Heart right ventricle (tissue), 16 donors: ENCODE measurements at regions of chr12 and their contacts with region 1.

Region 1: GRCh38 chr12:98593351-98594049 is at the start of gene SLC25A3:
- DNase-seq: peak; percentile 97
- ATAC-seq: peak; percentile 99
- H3K4me3 ChIP-seq: peak within 1 kb of the TSS; percentile 76 to 99 (median 91)
- H3K27ac ChIP-seq: peak within 1 kb of the TSS; percentile 97 to 100 (median 99)
- H3K4me1 ChIP-seq: peaks cover 14 to 41% (median 27%) of the 10 kb centered on the region in 9 donors
- H3K27me3 ChIP-seq: no peaks in the 10 kb centered on the region
- CTCF ChIP-seq: no peak
- total RNA-seq, gene SLC25A3: 1,098 to 2,142 (median 1,719) TPM

Region 2: GRCh38 chr12:98503592-98504367 is 89.7 kb before region 1 on chr12:
- intact Hi-C with region 1: loop called in 1 of 10 experiments (anchors 5 kb)
- DNase-seq: peak; percentile 93 to 96
- ATAC-seq: peak; percentile 92 to 97 (median 96)
- H3K4me3 ChIP-seq: peak overlapping the region; percentile 39 to 71 (median 62)
- H3K27ac ChIP-seq: peak overlapping the region; percentile 87 to 98 (median 96)
- H3K4me1 ChIP-seq: peaks cover 0 to 15% (median 0%) of the 10 kb centered on the region in 9 donors
- H3K27me3 ChIP-seq: no peaks in the 10 kb centered on the region
- CTCF ChIP-seq: no peak

Region 3: GRCh38 chr12:98955277-98955676 is 361.8 kb after region 1 on chr12:
- intact Hi-C with region 1: no loop called
- DNase-seq: no peak
- ATAC-seq: no peak
- H3K4me3 ChIP-seq: no peak overlapping the region
- H3K27ac ChIP-seq: no peak overlapping the region
- H3K4me1 ChIP-seq: no peaks in the 10 kb centered on the region
- H3K27me3 ChIP-seq: no peaks in the 10 kb centered on the region
- CTCF ChIP-seq: no peak